AG04450 (cell line): ENCODE measurements at regions of chr13 and their contacts with region 1.

Region 1: GRCh38 chr13:29508130-29508875 is 87.2 kb downstream of the SLC7A1 start:
- DNase-seq: peak; percentile 47
- H3K4me3 ChIP-seq: no peak overlapping the region
- H3K27ac ChIP-seq: no peak overlapping the region
- H3K27me3 ChIP-seq: no peaks in the 10 kb centered on the region
- CTCF ChIP-seq: peak; percentile 98

Region 2: DNA sequence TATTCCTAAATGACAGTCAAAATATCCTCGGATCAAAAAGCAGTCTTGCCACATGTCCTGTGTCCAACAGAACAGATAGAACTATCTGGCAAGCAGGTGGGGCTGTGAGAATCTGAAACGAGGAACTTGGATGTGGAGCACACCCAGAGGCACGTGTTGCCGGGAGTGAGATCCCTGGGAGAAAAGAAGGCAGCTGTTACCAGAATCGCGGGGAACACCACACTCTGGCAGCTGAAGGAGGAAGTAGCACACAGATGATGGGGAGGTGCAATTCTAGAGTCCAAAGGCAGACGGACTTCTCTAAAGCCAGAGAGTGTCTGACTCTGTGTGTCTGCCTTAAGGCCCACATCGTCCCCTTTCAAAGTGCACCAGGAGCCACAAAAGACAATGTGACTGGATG is 64.9 kb after region 1 on chr13:
- CTCF ChIA-PET with region 1: interaction called, 13 read pairs
- POLR2A ChIA-PET with region 1: no interaction called
- DNase-seq: no peak
- H3K4me3 ChIP-seq: no peak overlapping the region
- H3K27ac ChIP-seq: no peak overlapping the region
- H3K27me3 ChIP-seq: no peaks in the 10 kb centered on the region
- CTCF ChIP-seq: no peak

Region 3: DNA sequence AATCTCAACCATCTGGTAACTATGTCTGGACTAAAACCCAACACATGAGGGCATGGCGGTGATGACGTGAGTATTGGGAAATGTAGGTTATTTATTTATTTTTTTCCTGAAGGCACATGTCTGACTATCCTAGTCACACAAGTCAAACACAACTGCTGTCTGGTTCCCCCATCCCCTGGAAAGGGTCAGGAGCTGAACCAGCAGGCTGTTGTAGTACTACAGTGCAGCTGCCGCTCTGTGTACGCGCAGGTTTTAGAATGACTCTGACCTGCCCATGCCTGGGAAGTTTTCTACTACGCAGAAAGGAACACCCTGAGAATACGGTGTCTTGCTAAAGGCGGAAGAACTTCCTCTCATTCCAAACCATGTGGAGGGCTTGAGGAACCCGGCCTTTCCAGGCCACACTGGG is 86.0 kb after region 1 on chr13:
- CTCF ChIA-PET with region 1: no interaction called
- POLR2A ChIA-PET with region 1: no interaction called
- DNase-seq: peak; percentile 56
- H3K4me3 ChIP-seq: peak overlapping the region; percentile 78
- H3K27ac ChIP-seq: peak overlapping the region; percentile 89
- H3K27me3 ChIP-seq: no peaks in the 10 kb centered on the region
- CTCF ChIP-seq: no peak

Region 4: GRCh38 chr13:29707876-29708543 is 199.7 kb after region 1 on chr13:
- CTCF ChIA-PET with region 1: interaction called, 44 read pairs
- POLR2A ChIA-PET with region 1: no interaction called
- DNase-seq: peak; percentile 2
- H3K4me3 ChIP-seq: no peak overlapping the region
- H3K27ac ChIP-seq: no peak overlapping the region
- H3K27me3 ChIP-seq: peaks cover 2% of the 10 kb centered on the region
- CTCF ChIP-seq: peak; percentile 77

Region 5: GRCh38 chr13:29771247-29771646 is 262.9 kb after region 1 on chr13:
- CTCF ChIA-PET with region 1: interaction called, 11 read pairs
- POLR2A ChIA-PET with region 1: no interaction called
- DNase-seq: no peak
- H3K4me3 ChIP-seq: no peak overlapping the region
- H3K27ac ChIP-seq: no peak overlapping the region
- H3K27me3 ChIP-seq: no peaks in the 10 kb centered on the region
- CTCF ChIP-seq: peak; percentile 43

Region 6: DNA sequence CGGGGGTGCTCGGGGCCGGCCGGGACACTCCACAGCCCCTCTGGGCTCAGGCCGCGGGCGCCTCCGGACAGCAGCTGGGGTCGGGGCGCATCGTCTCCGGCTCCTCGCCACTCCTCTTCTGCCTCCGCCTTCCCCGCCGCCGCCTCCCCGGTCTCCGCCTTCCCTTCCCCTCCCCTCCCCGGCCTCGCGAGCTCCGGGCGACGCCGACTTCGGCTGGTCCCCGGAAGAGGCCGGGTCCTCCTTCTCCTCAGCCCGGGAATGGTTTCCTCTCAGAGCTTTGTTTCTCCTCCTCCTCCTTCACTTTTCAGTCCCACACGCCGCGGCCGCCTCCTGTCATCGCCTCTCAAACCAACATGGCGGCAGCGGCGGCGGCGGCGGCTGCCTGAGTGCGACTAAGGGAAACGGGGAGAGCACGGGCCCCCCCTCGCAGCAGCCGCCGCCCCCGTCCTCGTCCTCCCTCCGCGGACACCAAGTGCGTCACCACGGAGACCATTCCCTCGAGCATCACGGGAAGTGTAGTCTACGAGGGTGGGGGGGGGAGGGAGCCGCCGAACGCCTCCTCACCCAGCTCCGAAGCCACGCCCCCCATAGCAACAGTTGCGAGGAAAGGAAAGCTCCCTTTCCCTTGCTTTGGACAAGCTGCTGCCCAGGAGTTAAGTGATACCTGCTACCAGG is 342.1 kb after region 1 on chr13 and contains the start of gene UBL3:
- CTCF ChIA-PET with region 1: interaction called, 11 read pairs
- POLR2A ChIA-PET with region 1: no interaction called
- DNase-seq: peak; percentile 87
- H3K4me3 ChIP-seq: peak within 1 kb of the TSS; percentile 70
- H3K27ac ChIP-seq: peak within 1 kb of the TSS; percentile 99
- H3K27me3 ChIP-seq: no peaks in the 10 kb centered on the region
- CTCF ChIP-seq: no peak
- polyA plus RNA-seq, gene UBL3: 16.8 and 24.7 TPM in 2 replicates